Ascending aorta (tissue), 2 donors: ENCODE measurements at regions of chr11 and their contacts with region 1.

Region 1: GRCh38 chr11:91104237-91104636 is 881.4 kb upstream of the CHORDC1 start:
- DNase-seq: no peak
- H3K4me3 ChIP-seq: no peak overlapping the region
- H3K27ac ChIP-seq: no peak overlapping the region
- H3K4me1 ChIP-seq: no peaks in the 10 kb centered on the region
- H3K27me3 ChIP-seq: no peaks in the 10 kb centered on the region
- CTCF ChIP-seq: no peak

Region 2: DNA sequence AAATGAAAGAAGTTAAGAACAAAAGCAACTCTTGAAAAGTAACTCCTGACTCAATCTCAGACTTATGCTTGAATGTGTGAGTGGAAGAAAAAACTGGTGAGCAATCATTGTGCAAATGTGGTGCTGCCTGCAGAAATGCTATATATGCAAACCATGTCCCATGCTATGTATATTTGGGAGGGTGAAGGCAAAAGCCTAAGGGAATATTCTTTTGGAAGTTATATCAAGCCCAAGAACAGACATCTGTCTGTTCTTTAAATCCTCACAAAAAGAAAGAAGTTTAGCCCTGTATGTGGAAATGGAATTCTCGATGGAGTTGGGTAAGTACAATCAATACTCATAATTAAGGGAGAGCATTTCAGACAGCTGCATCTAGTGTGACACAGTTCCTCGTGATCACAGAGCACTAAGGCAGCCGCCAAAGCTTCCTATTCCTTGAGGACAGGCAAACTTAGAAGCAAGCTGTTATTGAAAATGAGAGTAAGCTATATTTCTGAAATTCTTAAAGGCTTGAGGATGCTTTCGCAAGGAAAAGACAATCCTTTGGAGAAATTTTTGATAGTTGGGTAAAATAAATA is 474.9 kb before region 1 on chr11:
- intact Hi-C with region 1: no loop called
- DNase-seq: no peak
- H3K4me3 ChIP-seq: no peak overlapping the region
- H3K27ac ChIP-seq: no peak overlapping the region
- H3K4me1 ChIP-seq: no peaks in the 10 kb centered on the region
- H3K27me3 ChIP-seq: no peaks in the 10 kb centered on the region
- CTCF ChIP-seq: no peak

Region 3: DNA sequence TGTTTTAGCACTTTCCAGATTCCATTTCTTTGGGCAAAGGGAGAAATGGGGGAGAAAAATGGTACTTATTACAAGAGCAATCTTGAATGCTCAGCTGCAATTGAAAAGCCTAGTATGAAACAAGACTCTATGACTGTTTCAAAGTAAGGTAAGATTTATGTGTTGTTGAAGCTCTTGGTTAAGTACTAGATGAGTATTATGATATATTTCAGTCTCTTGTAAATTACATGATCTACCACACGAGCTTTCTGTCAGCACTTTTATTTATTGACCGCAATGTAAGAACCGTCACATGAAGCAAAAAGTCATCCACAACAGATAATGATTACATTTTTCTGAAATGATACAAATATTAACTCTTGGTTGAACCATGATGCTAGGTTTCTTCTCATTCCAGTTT is 25.4 kb after region 1 on chr11:
- intact Hi-C with region 1: loop called (anchors 2 kb)
- DNase-seq: no peak
- H3K4me3 ChIP-seq: no peak overlapping the region
- H3K27ac ChIP-seq: no peak overlapping the region
- H3K4me1 ChIP-seq: peaks cover 0 to 9% of the 10 kb centered on the region in 2 donors
- H3K27me3 ChIP-seq: no peaks in the 10 kb centered on the region
- CTCF ChIP-seq: no peak

Region 4: DNA sequence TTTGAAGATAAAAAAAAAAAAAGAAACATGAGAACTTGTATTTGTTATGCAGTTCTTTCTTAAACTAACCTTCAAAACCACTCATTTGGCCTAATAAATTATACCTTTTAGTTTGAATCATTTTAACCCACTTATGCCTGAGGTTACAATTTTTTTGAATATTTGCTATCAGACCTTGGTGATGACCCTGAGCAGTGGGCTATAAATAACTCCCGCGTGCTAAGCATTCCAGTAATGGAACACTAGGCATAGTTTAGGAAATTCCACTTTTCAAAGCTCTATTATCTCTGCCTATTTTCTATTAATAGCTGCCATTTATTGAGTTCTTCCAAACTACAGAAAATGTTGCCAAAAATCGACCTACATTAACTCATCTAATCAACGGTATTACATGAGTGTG is 127.0 kb after region 1 on chr11:
- intact Hi-C with region 1: no loop called
- DNase-seq: no peak
- H3K4me3 ChIP-seq: no peak overlapping the region
- H3K27ac ChIP-seq: no peak overlapping the region
- H3K4me1 ChIP-seq: no peaks in the 10 kb centered on the region
- H3K27me3 ChIP-seq: no peaks in the 10 kb centered on the region
- CTCF ChIP-seq: no peak